ENCODE measurements at regions of chr12 and their contacts with region 1.

Region 1: GRCh38 chr12:54588110-54588889 is at the start of gene PPP1R1A:
- DNase-seq: no peak
- ATAC-seq: peak; percentile 13
- H3K4me3 Mint-ChIP-seq: peak within 1 kb of the TSS; percentile 13
- H3K27ac Mint-ChIP-seq: no peak within 1 kb of the TSS
- H3K4me1 Mint-ChIP-seq: peaks cover 5% of the 10 kb centered on the region
- H3K27me3 Mint-ChIP-seq: peaks cover 56% of the 10 kb centered on the region
- CTCF ChIP-seq: no peak
- total RNA-seq, gene PPP1R1A: not detected

Region 2: GRCh38 chr12:54603173-54603814 is 15.0 kb after region 1 on chr12:
- CTCF ChIA-PET with region 1: interaction called, 120 read pairs
- POLR2A ChIA-PET with region 1: interaction called, 3 read pairs
- intact Hi-C with region 1: no loop called
- DNase-seq: peak; percentile 85
- ATAC-seq: peak; percentile 95
- H3K4me3 Mint-ChIP-seq: no peak overlapping the region
- H3K27ac Mint-ChIP-seq: no peak overlapping the region
- H3K4me1 Mint-ChIP-seq: peaks cover 5% of the 10 kb centered on the region
- H3K27me3 Mint-ChIP-seq: peaks cover 2% of the 10 kb centered on the region
- CTCF ChIP-seq: peak; percentile 80

Region 3: GRCh38 chr12:54631988-54632728 is 43.9 kb after region 1 on chr12:
- CTCF ChIA-PET with region 1: no interaction called
- POLR2A ChIA-PET with region 1: no interaction called
- intact Hi-C with region 1: no loop called
- DNase-seq: no peak
- ATAC-seq: no peak
- H3K4me3 Mint-ChIP-seq: no peak overlapping the region
- H3K27ac Mint-ChIP-seq: no peak overlapping the region
- H3K4me1 Mint-ChIP-seq: peaks cover 3% of the 10 kb centered on the region
- H3K27me3 Mint-ChIP-seq: peaks cover 21% of the 10 kb centered on the region
- CTCF ChIP-seq: no peak

Measured in activated CD8-positive, alpha-beta T cell treated with anti-CD3 and anti-CD28 coated beads for 36 hours (primary cell).